CD4-positive, alpha-beta memory T cell (primary cell): ENCODE measurements at regions of chr1 and their contacts with region 1.

Region 1: DNA sequence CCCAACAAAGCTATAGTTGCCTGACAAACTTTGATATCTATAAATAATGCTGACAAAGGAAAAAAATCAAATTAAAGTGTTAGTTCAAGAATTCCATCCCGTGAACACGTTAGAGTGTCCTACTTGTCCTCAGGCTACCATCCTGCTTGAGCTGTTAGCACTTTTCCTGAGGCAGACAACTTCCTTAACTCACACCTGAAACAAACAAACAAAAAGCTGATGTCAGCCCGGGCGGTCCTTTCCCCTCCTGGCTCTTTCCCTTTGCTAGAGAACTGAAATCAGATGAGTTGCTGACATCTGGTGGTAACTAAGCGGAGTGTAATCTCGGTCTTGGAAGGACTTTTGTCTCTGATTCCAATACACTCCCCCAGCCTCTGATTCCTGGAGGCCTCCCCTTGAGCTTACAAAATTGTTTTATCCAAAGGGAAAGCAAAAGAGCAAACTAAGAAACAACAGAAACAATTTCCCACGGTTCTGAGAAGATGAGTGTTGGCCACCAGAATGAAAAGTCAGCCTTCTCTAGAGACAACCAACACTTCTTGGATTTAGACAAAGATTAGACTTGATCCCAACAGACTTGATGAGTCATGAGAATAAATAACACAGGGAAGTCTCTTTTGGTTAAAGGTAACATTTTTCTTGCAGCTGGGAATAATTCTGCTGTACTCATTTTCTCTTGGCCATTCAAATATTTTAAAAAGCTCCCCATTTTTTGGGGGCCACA is 135.4 kb downstream of the PROX1 start:
- DNase-seq: peak in 4 of 5 donors; percentile 12 to 23 (median 15)
- H3K4me3 ChIP-seq: no peak overlapping the region
- H3K4me3 Mint-ChIP-seq: no peak overlapping the region
- H3K27ac ChIP-seq: no peak overlapping the region
- H3K27ac Mint-ChIP-seq: no peak overlapping the region
- H3K4me1 ChIP-seq: no peaks in the 10 kb centered on the region
- H3K4me1 Mint-ChIP-seq: peaks cover 0 to 4% (median 0%) of the 10 kb centered on the region in 4 donors
- H3K27me3 ChIP-seq: no peaks in the 10 kb centered on the region
- H3K27me3 Mint-ChIP-seq: peaks cover 3 to 4% of the 10 kb centered on the region in 2 donors

Region 2: DNA sequence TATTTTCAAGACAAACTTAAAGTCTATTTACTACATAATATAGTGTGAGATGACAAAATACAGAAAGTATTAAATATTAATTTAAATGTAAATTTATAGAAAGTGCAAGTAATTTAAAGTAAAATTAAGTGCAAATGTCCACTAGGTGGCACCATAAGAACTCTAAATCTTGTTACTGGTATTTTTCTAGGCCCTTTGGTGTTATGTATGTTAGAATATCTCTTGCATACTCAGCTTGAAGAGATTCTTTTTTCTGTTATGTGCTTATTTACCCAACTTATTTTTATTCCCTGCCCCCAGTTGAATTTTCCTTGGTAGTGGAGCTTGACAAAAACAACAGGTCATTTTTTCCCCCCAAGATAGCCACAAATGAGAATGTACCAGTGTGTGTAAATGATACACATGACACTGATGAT is 1000.7 kb before region 1 on chr1:
- CTCF ChIA-PET with region 1: interaction called, 3 read pairs
- POLR2A ChIA-PET with region 1: no interaction called
- intact Hi-C with region 1: loop called (anchors 5 kb)
- DNase-seq: peak in 4 of 5 donors; percentile 11 to 16 (median 12)
- H3K4me3 ChIP-seq: no peak overlapping the region
- H3K4me3 Mint-ChIP-seq: no peak overlapping the region
- H3K27ac ChIP-seq: no peak overlapping the region
- H3K27ac Mint-ChIP-seq: no peak overlapping the region
- H3K4me1 ChIP-seq: no peaks in the 10 kb centered on the region
- H3K4me1 Mint-ChIP-seq: peaks cover 0 to 2% (median 0%) of the 10 kb centered on the region in 4 donors
- H3K27me3 ChIP-seq: no peaks in the 10 kb centered on the region
- H3K27me3 Mint-ChIP-seq: no peaks in the 10 kb centered on the region

Region 3: GRCh38 chr1:213669964-213670691 is 453.1 kb before region 1 on chr1:
- CTCF ChIA-PET with region 1: interaction called, 10 read pairs
- POLR2A ChIA-PET with region 1: no interaction called
- intact Hi-C with region 1: no loop called
- DNase-seq: peak; percentile 42 to 60 (median 58)
- H3K4me3 ChIP-seq: no peak overlapping the region
- H3K4me3 Mint-ChIP-seq: peak overlapping the region in 3 of 8 donors; percentile 10 to 56 (median 10)
- H3K27ac ChIP-seq: no peak overlapping the region
- H3K27ac Mint-ChIP-seq: peak overlapping the region in 6 of 7 donors; percentile 25 to 86 (median 60)
- H3K4me1 ChIP-seq: peaks cover 13% of the 10 kb centered on the region
- H3K4me1 Mint-ChIP-seq: peaks cover 4 to 11% (median 9%) of the 10 kb centered on the region in 4 donors
- H3K27me3 ChIP-seq: no peaks in the 10 kb centered on the region
- H3K27me3 Mint-ChIP-seq: peaks cover 0 to 1% of the 10 kb centered on the region in 2 donors

Region 4: GRCh38 chr1:213761845-213762407 is 361.3 kb before region 1 on chr1:
- CTCF ChIA-PET with region 1: no interaction called
- POLR2A ChIA-PET with region 1: no interaction called
- intact Hi-C with region 1: loop called (anchors 2 kb)
- DNase-seq: peak; percentile 22 to 45 (median 27)
- H3K4me3 ChIP-seq: no peak overlapping the region
- H3K4me3 Mint-ChIP-seq: peak overlapping the region in 5 of 8 donors; percentile 4 to 68 (median 42)
- H3K27ac ChIP-seq: no peak overlapping the region
- H3K27ac Mint-ChIP-seq: peak overlapping the region in 5 of 7 donors; percentile 14 to 78 (median 38)
- H3K4me1 ChIP-seq: peaks cover 11% of the 10 kb centered on the region
- H3K4me1 Mint-ChIP-seq: peaks cover 4 to 27% (median 13%) of the 10 kb centered on the region in 4 donors
- H3K27me3 ChIP-seq: no peaks in the 10 kb centered on the region
- H3K27me3 Mint-ChIP-seq: peaks cover under 1 to 1% of the 10 kb centered on the region in 2 donors

Region 5: DNA sequence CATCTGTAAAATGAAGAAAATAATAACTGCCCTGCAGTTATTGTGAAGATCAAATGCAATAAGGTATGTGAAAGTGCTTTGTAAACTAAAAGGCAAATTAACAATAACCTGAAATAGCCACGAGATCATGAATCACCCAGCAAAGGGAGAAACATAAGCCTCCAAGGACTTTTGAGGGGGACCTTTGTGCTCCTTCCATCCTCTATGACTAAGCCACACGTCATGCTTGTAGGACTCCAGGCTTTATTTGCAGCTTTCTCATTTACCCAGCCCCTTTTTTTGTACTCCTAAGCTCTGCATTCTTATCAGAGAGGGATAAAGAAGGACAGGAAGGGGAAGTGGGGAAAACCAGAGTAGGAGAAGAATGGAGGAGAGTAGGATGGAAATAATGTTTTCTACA is 20.3 kb before region 1 on chr1:
- CTCF ChIA-PET with region 1: no interaction called
- POLR2A ChIA-PET with region 1: no interaction called
- intact Hi-C with region 1: no loop called
- DNase-seq: no peak
- H3K4me3 ChIP-seq: no peak overlapping the region
- H3K4me3 Mint-ChIP-seq: no peak overlapping the region
- H3K27ac ChIP-seq: no peak overlapping the region
- H3K27ac Mint-ChIP-seq: no peak overlapping the region
- H3K4me1 ChIP-seq: no peaks in the 10 kb centered on the region
- H3K4me1 Mint-ChIP-seq: no peaks in the 10 kb centered on the region
- H3K27me3 ChIP-seq: no peaks in the 10 kb centered on the region
- H3K27me3 Mint-ChIP-seq: peaks cover 3 to 6% of the 10 kb centered on the region in 2 donors

Region 6: DNA sequence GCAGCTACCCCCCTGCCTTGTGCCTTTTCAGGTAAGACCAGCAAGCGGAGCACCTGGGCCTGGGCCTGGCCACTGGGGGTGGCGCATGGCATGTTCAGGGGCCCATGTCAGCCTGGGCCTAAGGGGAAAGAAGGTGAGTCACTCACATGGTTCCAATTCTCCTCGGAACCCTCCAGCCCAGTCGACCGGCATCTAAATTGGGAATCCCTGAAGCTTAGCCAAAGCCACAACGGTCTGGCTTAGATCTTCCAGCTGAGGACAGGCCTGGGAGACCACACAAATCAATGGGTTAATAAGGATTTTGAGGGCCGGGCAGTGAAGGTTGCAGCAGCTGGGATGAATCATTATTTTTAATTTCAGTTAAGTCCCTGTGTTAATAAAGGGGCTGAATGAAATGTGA is 12.7 kb after region 1 on chr1:
- CTCF ChIA-PET with region 1: no interaction called
- POLR2A ChIA-PET with region 1: no interaction called
- intact Hi-C with region 1: no loop called
- DNase-seq: no peak
- H3K4me3 ChIP-seq: no peak overlapping the region
- H3K4me3 Mint-ChIP-seq: no peak overlapping the region
- H3K27ac ChIP-seq: no peak overlapping the region
- H3K27ac Mint-ChIP-seq: no peak overlapping the region
- H3K4me1 ChIP-seq: no peaks in the 10 kb centered on the region
- H3K4me1 Mint-ChIP-seq: no peaks in the 10 kb centered on the region
- H3K27me3 ChIP-seq: no peaks in the 10 kb centered on the region
- H3K27me3 Mint-ChIP-seq: peaks cover 0 to 9% of the 10 kb centered on the region in 2 donors